ENCODE measurements at regions of chr9 and their contacts with region 1.

Region 1: GRCh38 chr9:98034593-98035546 is 21.7 kb upstream of the NANS start:
- DNase-seq: peak; percentile 75
- H3K4me3 ChIP-seq: no peak overlapping the region
- H3K27ac ChIP-seq: peak overlapping the region; percentile 65
- H3K4me1 ChIP-seq: peaks cover 13% of the 10 kb centered on the region
- H3K27me3 ChIP-seq: no peaks in the 10 kb centered on the region
- CTCF ChIP-seq: peak; percentile 74 to 87
- POLR2A ChIP-seq: no peak

Region 2: DNA sequence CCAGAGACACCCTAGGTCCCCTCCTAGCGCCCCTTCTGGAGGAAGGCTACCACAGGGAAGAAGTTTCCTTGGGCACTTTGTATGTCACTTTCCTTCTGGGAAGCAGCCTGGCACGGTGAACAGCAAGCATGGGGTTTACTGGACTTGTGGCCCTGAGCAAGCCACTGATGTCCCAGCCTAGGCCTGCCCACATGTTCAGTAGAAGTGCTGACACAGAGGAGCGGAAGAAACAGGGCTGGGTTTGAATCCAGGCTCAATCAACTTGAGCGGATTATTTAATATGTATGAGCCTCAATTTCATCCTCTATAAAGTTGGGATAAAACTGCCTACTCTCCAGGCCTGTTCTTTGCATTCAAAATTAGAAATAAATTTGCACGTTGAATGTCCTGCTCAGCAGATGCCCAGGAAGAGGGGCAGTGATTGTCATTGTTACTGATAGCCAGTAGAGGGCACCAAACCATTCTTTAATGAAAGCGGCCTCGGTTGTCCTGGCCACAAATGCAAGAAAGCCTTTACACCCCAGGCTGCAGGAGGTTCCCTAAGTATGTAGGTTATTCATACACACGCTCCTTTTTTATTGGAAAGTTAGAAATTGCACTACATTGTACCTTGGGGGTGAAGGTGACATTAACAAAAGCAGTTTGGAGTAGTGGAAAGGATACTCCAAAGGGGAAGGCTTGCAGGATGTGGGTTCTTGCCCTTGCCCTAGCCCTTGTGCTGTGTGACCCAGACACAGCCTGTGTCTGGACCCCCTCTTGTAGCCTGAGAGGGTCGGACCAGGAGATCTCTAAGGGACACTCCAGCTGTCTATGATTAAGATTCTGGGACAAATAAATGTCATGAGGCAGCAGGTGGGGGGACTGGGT is 324.3 kb before region 1 on chr9:
- CTCF ChIA-PET with region 1: no interaction called
- POLR2A ChIA-PET with region 1: no interaction called
- dilution Hi-C with region 1: no loop called
- intact Hi-C with region 1: loop called (anchors 5 kb)
- DNase-seq: peak; percentile 69
- H3K4me3 ChIP-seq: no peak overlapping the region
- H3K27ac ChIP-seq: no peak overlapping the region
- H3K4me1 ChIP-seq: no peaks in the 10 kb centered on the region
- H3K27me3 ChIP-seq: peaks cover 14 to 17% of the 10 kb centered on the region in 2 experiments
- CTCF ChIP-seq: peak; percentile 73 to 76
- POLR2A ChIP-seq: no peak

Region 3: GRCh38 chr9:97873877-97874276 is 161.0 kb before region 1 on chr9:
- CTCF ChIA-PET with region 1: no interaction called
- POLR2A ChIA-PET with region 1: no interaction called
- dilution Hi-C with region 1: no loop called
- intact Hi-C with region 1: no loop called
- DNase-seq: no peak
- H3K4me3 ChIP-seq: no peak overlapping the region
- H3K27ac ChIP-seq: no peak overlapping the region
- H3K4me1 ChIP-seq: no peaks in the 10 kb centered on the region
- H3K27me3 ChIP-seq: peaks cover 4% of the 10 kb centered on the region in 2 experiments
- CTCF ChIP-seq: no peak
- POLR2A ChIP-seq: no peak

Region 4: GRCh38 chr9:97990266-97990665 is 44.6 kb before region 1 on chr9:
- CTCF ChIA-PET with region 1: interaction called, 11 read pairs
- POLR2A ChIA-PET with region 1: interaction called, 3 read pairs
- dilution Hi-C with region 1: no loop called
- intact Hi-C with region 1: no loop called
- DNase-seq: peak; percentile 40
- H3K4me3 ChIP-seq: no peak overlapping the region
- H3K27ac ChIP-seq: peak overlapping the region; percentile 23
- H3K4me1 ChIP-seq: peaks cover 23% of the 10 kb centered on the region
- H3K27me3 ChIP-seq: no peaks in the 10 kb centered on the region
- CTCF ChIP-seq: peak; percentile 9 to 17
- POLR2A ChIP-seq: no peak

Region 5: GRCh38 chr9:98010445-98010844 is 24.4 kb before region 1 on chr9:
- CTCF ChIA-PET with region 1: interaction called, 30 read pairs
- POLR2A ChIA-PET with region 1: no interaction called
- dilution Hi-C with region 1: no loop called
- intact Hi-C with region 1: no loop called
- DNase-seq: peak; percentile 82
- H3K4me3 ChIP-seq: no peak overlapping the region
- H3K27ac ChIP-seq: peak overlapping the region; percentile 71
- H3K4me1 ChIP-seq: peaks cover 42% of the 10 kb centered on the region
- H3K27me3 ChIP-seq: no peaks in the 10 kb centered on the region
- CTCF ChIP-seq: no peak
- POLR2A ChIP-seq: peak; percentile 16

Region 6: DNA sequence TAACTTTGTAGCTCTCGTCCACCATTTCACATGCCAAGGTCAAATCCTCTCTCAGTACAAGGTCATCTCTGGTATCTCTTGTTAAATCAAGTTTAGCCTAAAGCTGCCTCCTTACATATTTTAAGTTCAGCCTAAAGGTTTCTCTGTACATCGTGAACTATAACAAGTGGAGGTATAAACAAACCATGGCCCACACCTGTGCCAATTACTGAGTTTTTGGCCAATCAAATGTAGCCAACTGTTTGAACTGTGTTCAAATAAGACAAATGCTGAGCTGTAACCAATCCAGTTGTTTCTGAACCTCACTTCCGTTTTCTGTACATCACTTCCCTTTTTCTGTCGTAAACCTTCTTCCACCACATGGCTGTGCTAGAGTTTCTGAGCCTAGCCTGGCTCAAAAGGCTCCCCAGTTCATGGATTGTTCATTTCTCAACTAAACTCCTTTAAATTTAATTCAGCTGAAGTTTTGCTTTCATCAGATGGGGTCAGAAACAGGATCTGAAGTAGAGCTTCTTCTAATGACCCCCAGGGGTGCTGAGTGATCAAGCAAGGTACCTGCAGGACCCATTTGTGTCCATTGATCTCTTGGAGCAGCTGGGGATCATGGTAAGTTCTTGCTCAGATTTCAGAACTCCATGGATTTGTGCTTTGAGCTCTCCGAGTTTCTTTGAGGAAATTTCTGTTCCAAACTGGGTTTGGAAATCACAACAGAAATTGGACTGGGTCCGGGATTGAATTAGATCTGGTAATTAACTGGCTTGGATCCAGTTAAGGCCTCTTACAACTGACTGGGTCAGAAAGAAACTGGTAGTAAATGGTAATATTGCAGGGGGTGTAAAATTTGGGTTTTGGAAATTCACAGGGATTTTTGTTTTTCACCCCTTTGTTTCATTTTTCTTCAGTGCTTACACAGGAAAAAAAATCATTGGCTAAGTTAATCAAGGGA is 10.6 kb after region 1 on chr9:
- CTCF ChIA-PET with region 1: interaction called, 40 read pairs
- POLR2A ChIA-PET with region 1: no interaction called
- dilution Hi-C with region 1: no loop called
- intact Hi-C with region 1: no loop called
- DNase-seq: no peak
- H3K4me3 ChIP-seq: no peak overlapping the region
- H3K27ac ChIP-seq: no peak overlapping the region
- H3K4me1 ChIP-seq: no peaks in the 10 kb centered on the region
- H3K27me3 ChIP-seq: peaks cover 0 to 2% of the 10 kb centered on the region in 2 experiments
- CTCF ChIP-seq: no peak
- POLR2A ChIP-seq: no peak

Region 7: DNA sequence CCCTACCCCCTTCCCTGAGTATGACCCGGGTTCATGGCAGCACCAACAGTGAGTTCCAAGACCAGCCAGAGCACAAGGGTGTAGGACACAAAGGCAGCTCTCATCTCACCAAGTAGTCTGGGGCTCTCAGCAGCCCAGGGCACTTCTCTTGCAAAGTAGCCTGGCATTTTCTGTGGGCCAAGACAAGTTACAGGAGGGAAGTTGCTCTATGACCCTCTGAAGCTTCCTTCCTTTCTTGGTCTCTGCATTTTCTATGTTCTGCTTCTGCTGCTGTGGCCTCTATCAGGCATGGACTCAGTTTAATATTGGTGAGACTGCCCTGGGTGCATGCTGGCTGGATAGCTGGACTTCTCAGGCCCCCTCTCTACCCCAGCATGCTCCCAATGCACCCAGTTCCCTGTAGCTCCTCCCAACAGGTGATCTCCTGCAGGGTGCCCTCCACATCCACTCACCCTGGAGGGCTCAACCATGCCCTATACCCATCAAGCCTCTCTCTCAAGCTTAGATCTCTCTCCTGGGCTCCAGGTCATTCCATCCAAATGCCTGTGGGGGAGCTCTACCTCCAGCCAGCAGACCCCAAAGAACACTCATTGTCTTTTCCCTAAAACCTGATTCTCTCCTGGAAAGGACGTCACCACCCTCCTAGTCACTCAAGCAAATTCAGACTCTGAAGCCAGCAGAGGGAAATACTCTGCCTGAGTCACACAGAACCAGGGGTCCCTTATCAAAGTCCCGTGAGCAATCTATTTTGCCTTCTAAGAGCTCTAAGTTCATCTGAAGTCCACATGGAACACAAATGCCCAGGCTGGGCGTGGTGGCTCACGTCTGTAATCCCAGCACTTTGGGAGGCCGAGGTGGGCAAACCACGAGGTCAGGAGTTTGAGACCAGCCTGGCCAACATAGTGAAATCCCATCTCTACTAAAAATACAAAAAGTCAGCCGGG is 206.8 kb after region 1 on chr9:
- CTCF ChIA-PET with region 1: no interaction called
- POLR2A ChIA-PET with region 1: no interaction called
- dilution Hi-C with region 1: no loop called
- intact Hi-C with region 1: no loop called
- DNase-seq: no peak
- H3K4me3 ChIP-seq: no peak overlapping the region
- H3K27ac ChIP-seq: no peak overlapping the region
- H3K4me1 ChIP-seq: no peaks in the 10 kb centered on the region
- H3K27me3 ChIP-seq: no peaks in the 10 kb centered on the region
- CTCF ChIP-seq: peak in 1 of 2 donors; percentile 8
- POLR2A ChIP-seq: no peak